GM13977 (cell line): ENCODE measurements at regions of chr1 and their contacts with region 1.

Region 1: DNA sequence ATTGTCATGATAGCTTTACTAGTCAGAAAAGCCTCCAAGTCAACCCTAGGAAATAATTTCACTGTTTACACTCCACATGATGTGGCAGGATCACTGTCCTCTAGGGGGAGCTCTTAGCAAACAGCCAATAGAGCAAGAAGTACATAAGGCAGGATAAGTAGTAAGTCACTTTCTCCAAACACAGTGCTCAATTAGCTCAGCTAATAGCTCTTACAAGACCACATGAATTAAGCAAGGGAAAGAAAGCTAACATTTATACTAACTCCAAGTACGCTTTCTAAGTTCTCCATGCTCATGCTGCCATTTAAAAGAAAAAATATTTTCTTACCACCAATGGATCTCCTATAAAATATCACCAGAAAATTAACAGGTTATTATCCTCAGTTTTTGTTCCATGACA is 66.9 kb upstream of the LRIF1 start:
- DNase-seq: peak; percentile 51
- CTCF ChIP-seq: peak; percentile 92

Region 2: DNA sequence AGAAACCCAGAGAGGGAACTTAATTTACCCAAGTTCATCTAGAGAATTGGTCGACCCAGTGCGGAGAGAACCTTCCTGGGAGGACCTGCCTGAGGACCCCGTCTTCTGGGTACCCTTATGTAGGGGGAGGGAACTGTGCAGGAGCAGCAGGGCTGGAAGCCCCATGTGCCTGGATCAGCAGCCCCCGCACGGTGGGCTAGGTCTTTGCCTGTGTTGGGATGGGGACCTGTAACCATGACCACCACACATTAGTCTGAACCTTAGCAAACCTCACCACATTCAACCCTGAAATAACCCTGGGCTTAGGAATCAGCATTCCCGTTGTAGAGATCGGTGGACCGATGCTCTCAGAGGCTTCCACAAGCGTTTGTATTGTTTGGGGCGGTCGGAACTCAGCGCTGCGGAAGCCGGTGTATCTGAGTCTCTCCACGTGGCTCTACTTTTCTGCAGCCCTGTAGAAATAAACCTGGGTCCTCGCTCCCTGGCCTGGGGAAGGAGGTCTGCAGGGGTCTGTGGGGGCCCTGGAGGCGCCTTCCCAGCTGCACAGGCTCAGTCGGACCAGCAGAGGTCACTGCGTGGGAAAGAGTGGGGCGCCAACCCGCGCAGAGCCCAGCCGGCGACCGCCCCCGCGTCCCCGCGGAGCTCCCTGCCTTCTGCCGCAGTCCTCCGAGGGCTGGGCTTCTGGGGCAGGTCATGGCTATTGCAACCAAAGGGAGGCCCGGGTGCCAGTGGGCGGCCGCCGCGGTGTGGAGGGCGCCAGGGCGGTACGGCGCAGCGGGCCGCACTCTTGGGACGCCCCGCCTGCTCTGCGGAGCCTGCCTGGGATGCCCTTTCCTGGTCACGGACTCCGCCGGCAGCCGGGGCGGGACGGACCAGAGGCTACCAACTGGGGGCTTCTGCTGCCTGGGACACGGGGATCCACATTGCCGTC is 475.5 kb before region 1 on chr1:
- in situ Hi-C with region 1: no loop called
- DNase-seq: peak; percentile 76
- CTCF ChIP-seq: peak; percentile 74

Region 3: DNA sequence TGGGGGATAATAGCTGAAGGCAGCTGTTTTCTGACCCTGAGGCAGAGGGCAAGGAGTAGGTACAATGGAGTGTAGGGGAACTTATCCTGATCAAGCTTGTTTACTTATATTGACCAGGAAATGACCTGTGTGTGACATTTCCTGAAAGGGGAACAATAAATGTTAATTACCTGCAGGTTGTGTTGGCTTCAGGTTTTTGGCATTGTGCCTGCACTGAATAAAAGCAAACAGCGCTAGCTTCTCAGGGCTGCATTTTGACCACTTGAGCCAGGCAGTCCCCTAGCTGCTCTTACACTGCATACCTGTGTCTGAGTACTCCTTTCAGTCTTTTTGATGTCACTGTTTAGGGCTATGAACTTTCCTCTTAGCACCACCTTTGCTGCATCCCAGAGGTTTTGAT is 68.7 kb after region 1 on chr1:
- in situ Hi-C with region 1: loop called (anchors 10 kb)
- DNase-seq: no peak
- CTCF ChIP-seq: no peak

Region 4: DNA sequence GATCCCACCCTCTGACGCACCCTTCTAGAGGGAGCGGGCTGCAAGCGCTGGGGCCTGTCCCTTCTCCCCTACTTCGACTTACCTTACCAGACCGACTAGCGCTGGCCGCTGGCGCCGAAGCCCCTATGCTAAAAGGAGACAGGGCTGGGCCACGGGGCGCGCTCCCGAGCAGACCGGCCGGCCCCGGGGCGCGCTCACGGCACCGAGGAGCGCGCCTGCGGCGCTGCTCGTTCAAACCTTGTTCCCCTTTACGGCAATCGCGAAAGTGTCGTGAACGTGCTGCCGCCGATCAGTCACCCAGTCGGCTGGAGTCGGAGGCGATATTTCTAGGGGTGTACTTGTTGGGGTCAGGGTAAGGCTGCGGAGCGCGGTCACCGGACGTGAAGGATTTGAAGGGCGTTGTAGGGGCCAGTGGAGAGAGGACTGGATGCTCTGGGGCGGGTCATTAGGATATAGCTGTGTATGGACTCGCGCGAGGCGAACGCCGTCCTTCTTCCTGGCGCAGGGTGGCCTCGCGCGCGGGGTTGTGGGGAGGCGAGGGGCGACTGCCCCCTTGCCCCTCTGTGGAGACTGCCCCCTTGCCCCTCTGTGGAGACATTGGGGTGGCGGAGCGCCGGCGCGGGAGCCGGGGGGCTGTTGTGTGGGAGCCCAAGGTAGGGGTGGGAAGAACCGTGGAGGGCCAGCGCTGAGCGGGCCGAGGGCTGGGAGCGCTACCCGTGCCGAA is 109.5 kb after region 1 on chr1 and contains the starts of genes CEPT1 and DRAM2:
- in situ Hi-C with region 1: no loop called
- DNase-seq: peak; percentile 94
- CTCF ChIP-seq: no peak

Region 5: DNA sequence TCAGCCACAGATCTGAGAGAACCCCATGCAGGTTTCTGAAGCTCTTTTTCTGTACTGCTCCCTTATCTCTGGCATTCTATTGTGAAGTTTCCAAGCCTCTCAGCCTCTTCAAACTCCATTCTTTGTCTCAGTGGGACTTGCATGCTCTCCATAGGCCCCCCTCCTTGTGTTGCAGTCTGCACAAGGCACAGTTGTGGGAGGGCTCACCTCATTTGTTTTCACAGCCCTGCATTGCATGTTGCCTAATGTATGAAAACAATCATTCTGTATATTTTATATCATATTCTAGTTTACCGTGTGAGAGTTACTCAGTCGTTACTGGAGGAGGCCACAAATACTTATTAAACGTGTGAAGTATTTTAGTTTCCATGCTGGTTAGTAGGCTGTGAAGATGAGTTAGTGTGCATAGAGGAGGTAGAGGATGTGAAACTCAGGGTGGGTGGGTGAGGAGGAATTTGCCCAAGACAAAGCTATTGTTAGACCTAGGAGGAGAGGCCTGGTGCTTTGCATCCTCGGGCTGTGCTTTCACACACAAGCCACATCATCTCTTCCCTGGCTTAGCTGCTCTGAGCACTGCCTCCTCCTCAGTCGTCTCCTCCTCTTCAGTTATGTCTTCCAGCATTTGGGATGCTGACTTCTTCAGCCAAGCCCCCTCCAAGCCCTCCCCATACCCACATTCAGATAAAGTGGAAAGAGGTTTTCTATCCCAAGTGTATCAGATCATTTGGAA is 189.1 kb after region 1 on chr1:
- in situ Hi-C with region 1: no loop called
- DNase-seq: no peak
- CTCF ChIP-seq: no peak